B cell (primary cell): ENCODE measurements at regions of chr1 and their contacts with region 1.

Region 1: GRCh38 chr1:6438047-6438525 is 13.5 kb downstream of the ESPN start:
- DNase-seq: peak; percentile 80
- ATAC-seq: peak; percentile 77
- H3K4me3 ChIP-seq: no peak overlapping the region
- H3K4me3 Mint-ChIP-seq: peak overlapping the region; percentile 56
- H3K27ac ChIP-seq: no peak overlapping the region
- H3K27ac Mint-ChIP-seq: no peak overlapping the region
- H3K4me1 ChIP-seq: peaks cover 3 to 5% of the 10 kb centered on the region in 2 donors
- H3K4me1 Mint-ChIP-seq: peaks cover 10% of the 10 kb centered on the region
- H3K27me3 ChIP-seq: peaks cover 0 to 29% (median 14%) of the 10 kb centered on the region in 4 experiments
- H3K27me3 Mint-ChIP-seq: peaks cover 32% of the 10 kb centered on the region
- CTCF ChIP-seq: peak; percentile 90

Region 2: GRCh38 chr1:6343506-6344405 is 94.3 kb before region 1 on chr1:
- CTCF ChIA-PET with region 1: interaction called, 22 read pairs
- POLR2A ChIA-PET with region 1: no interaction called
- intact Hi-C with region 1: no loop called
- DNase-seq: peak; percentile 43
- ATAC-seq: peak; percentile 54
- H3K4me3 ChIP-seq: no peak overlapping the region
- H3K4me3 Mint-ChIP-seq: no peak overlapping the region
- H3K27ac ChIP-seq: no peak overlapping the region
- H3K27ac Mint-ChIP-seq: no peak overlapping the region
- H3K4me1 ChIP-seq: peaks cover 2 to 9% of the 10 kb centered on the region in 2 donors
- H3K4me1 Mint-ChIP-seq: peaks cover 6% of the 10 kb centered on the region
- H3K27me3 ChIP-seq: no peaks in the 10 kb centered on the region
- H3K27me3 Mint-ChIP-seq: no peaks in the 10 kb centered on the region
- CTCF ChIP-seq: peak; percentile 63

Region 3: DNA sequence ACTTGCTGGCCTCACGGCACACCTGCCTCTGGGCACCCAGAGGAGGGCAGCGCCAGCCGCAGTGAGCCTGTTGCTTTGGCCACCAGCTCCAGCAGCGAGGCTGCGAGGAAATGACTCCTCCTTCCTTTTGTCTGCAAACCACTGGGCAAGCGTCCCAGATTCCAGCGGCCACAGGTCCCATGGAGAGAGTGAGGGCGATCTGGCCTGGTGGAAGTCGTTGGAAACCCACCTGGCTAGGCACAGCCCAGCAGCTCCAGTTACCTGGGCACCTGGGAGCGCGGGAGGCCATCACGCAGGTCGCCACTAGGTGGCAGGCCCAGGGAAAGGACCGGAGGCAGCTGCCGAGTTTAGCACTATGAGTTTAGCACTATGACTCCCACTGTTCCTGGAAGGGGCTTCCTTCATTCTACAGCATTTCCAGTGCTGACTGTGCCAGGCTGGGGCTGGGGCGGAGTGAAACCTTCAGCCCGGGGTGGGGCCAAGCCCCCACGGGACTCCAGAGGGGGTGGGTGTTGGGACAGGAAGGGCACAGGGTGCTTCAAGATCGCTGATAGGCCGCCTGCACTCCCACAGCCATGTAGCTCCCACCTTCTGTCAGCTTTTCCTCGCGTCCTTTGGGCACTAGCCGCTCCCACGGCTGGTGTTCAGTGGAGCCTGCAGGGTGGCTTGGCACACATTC is 14.6 kb before region 1 on chr1:
- CTCF ChIA-PET with region 1: interaction called, 53 read pairs
- POLR2A ChIA-PET with region 1: no interaction called
- intact Hi-C with region 1: no loop called
- DNase-seq: peak; percentile 73
- ATAC-seq: peak; percentile 69
- H3K4me3 ChIP-seq: peak overlapping the region in 3 of 5 experiments; percentile 1 to 37 (median 30)
- H3K4me3 Mint-ChIP-seq: peak overlapping the region; percentile 79
- H3K27ac ChIP-seq: no peak overlapping the region
- H3K27ac Mint-ChIP-seq: no peak overlapping the region
- H3K4me1 ChIP-seq: peaks cover 27 to 43% of the 10 kb centered on the region in 2 donors
- H3K4me1 Mint-ChIP-seq: peaks cover 15% of the 10 kb centered on the region
- H3K27me3 ChIP-seq: peaks cover 0 to 67% (median 32%) of the 10 kb centered on the region in 4 experiments
- H3K27me3 Mint-ChIP-seq: peaks cover 43% of the 10 kb centered on the region
- CTCF ChIP-seq: peak; percentile 86

Region 4: DNA sequence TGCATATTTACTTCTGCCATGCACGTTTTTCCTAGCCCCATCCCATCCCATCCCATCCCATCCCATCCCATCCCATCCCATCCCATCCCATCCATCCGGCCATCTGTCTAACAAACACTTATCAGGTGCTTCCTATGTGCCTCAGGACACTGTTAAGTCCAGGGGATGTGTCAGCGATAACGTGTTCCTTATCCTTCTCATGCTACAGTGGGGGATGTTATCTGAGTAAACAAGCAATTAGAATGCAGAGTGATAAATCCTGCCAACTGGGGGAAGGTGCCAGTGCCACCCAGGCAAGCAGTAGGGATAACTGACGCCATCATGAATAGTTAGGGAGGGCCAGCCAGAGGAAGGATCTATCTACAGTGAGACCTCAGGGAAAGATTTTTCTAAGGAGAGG is 651.4 kb after region 1 on chr1:
- CTCF ChIA-PET with region 1: no interaction called
- POLR2A ChIA-PET with region 1: no interaction called
- intact Hi-C with region 1: no loop called
- DNase-seq: no peak
- ATAC-seq: no peak
- H3K4me3 ChIP-seq: no peak overlapping the region
- H3K4me3 Mint-ChIP-seq: no peak overlapping the region
- H3K27ac ChIP-seq: no peak overlapping the region
- H3K27ac Mint-ChIP-seq: no peak overlapping the region
- H3K4me1 ChIP-seq: no peaks in the 10 kb centered on the region
- H3K4me1 Mint-ChIP-seq: no peaks in the 10 kb centered on the region
- H3K27me3 ChIP-seq: no peaks in the 10 kb centered on the region
- H3K27me3 Mint-ChIP-seq: no peaks in the 10 kb centered on the region
- CTCF ChIP-seq: no peak